H1 (cell line): ENCODE measurements at regions of chr9 and their contacts with region 1.

Region 1: DNA sequence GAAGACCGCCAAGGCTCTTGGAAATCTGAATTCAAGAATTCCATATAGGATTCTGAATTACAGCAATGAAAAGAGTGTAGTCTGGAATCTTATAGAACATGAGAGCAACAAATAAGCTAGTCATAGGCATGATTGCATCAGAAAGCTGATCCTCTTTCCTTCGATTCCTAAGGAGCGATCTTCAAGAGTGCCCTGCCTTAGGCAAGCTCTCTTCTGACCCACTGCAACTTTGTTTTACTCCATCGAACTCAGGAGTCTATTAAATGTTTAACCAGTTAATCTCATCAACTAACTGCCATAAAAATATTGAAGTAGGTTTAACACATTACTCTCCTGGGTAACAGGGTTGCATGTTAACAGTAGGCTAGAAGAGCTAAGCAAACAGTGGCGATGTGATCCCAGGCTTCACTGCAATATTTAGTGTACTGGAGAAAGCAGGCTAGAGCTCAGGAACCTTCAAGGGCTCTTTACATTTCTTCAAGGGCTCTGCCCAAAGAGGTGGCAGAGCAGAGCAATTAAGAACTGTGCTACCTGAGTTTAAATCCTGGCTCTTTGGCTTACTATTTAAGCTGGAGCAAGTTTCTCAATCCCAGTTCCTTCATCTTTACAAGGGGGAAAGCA is 146.3 kb downstream of the RORB start:
- DNase-seq: no peak
- H3K4me3 ChIP-seq: no peak overlapping the region
- H3K27ac ChIP-seq: no peak overlapping the region
- H3K4me1 ChIP-seq: no peaks in the 10 kb centered on the region; a peak in 1 of 7 replicates
- H3K27me3 ChIP-seq: no peaks in the 10 kb centered on the region; a peak in 1 of 7 replicates
- CTCF ChIP-seq: no peak
- EP300 ChIP-seq: no peak
- POLR2A ChIP-seq: no peak
- RAD21 ChIP-seq: no peak

Region 2: DNA sequence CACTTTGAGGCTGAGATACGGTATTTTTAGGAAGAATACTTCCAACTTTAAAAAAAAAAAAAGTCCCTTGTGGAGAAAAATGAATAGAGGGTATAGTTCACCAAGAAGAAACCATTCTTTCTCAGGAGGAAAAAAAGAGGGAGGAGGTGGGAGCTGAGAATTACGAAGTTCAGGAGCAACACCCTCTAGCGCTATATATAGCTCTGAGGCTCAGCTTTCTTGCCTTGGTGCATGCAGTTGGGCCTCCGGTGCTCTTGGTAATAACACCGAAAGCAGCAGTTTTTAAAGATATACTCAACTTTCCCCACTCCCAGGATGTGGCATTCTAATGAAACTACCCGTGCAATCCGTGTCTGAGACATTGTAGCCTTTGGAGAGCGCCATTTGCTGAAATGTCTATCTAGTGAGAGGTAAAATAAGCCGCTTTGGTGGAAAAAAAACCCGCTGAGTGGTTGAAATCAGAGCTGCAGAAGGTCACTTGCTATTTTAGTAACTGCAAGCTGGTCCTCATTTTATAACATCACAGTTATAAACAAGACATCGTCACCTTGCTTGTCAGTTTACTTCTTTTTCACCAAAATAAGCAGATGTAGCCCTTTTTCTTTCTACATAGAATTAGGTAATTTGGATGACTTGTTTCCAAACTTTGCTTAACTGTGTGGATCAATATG is 10.1 kb after region 1 on chr9:
- CTCF ChIA-PET with region 1: interaction called, 10 read pairs
- POLR2A ChIA-PET with region 1: no interaction called
- DNase-seq: no peak
- H3K4me3 ChIP-seq: no peak overlapping the region
- H3K27ac ChIP-seq: no peak overlapping the region
- H3K4me1 ChIP-seq: peaks cover 0 to 2% (median 0%) of the 10 kb centered on the region in 4 experiments; a peak in 2 of 7 replicates
- H3K27me3 ChIP-seq: no peaks in the 10 kb centered on the region
- CTCF ChIP-seq: no peak
- EP300 ChIP-seq: no peak
- POLR2A ChIP-seq: no peak
- RAD21 ChIP-seq: no peak